ENCODE measurements at regions of chr1 and their contacts with region 1.

Region 1: DNA sequence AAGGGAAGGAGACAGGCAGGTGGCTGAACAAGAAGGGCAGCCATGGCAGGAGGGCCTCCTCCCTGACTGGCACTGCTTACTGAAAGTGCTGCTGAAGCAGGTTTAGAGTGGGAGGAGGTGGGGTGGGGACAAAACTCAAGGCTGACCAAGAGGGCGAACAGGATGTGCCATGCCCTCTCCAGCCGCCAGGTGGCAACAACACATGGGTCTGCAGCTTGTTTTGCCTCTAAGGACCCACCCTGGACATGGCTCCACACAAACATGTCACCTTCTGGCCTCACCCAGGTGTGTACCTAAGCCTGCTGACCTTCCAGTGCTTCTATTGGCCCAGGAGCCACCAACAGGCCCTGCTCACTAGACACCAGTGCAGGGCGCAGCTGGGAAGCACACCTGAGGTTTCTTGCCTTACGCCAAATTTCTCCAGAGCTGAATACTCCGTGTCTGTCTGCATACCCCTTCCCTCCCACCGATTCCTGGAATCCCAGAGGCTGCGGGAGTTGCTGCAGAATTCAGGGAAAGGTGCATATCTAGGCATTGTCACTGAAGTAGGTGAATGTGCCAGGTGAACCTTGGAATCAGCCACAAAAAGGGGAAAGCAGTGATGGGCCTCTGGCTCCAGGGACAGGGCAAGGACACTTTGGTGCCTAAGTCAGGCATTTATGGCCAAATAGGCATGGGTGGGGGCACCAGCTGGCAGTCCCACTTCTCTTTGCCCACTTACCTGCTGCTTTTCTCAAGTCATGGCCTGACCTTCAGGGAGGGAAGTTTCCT is 5.3 kb downstream of the PSRC1 start:
- DNase-seq: peak; percentile 84 to 94
- H3K4me3 ChIP-seq: no peak overlapping the region
- H3K27ac ChIP-seq: peak overlapping the region in 3 of 5 donors; percentile 1 to 36 (median 5)
- H3K4me1 ChIP-seq: peaks cover 36 to 70% (median 39%) of the 10 kb centered on the region in 4 donors
- H3K27me3 ChIP-seq: no peaks in the 10 kb centered on the region
- CTCF ChIP-seq: peak in 5 of 7 experiments; percentile 88 to 94 (median 93)
- EP300 ChIP-seq: no peak
- POLR2A ChIP-seq: no peak

Region 2: GRCh38 chr1:109331113-109331512 is 53.5 kb after region 1 on chr1:
- intact Hi-C with region 1: no loop called
- DNase-seq: no peak
- H3K4me3 ChIP-seq: no peak overlapping the region
- H3K27ac ChIP-seq: no peak overlapping the region
- H3K4me1 ChIP-seq: no peaks in the 10 kb centered on the region
- H3K27me3 ChIP-seq: no peaks in the 10 kb centered on the region
- CTCF ChIP-seq: no peak
- EP300 ChIP-seq: no peak
- POLR2A ChIP-seq: no peak

Region 3: DNA sequence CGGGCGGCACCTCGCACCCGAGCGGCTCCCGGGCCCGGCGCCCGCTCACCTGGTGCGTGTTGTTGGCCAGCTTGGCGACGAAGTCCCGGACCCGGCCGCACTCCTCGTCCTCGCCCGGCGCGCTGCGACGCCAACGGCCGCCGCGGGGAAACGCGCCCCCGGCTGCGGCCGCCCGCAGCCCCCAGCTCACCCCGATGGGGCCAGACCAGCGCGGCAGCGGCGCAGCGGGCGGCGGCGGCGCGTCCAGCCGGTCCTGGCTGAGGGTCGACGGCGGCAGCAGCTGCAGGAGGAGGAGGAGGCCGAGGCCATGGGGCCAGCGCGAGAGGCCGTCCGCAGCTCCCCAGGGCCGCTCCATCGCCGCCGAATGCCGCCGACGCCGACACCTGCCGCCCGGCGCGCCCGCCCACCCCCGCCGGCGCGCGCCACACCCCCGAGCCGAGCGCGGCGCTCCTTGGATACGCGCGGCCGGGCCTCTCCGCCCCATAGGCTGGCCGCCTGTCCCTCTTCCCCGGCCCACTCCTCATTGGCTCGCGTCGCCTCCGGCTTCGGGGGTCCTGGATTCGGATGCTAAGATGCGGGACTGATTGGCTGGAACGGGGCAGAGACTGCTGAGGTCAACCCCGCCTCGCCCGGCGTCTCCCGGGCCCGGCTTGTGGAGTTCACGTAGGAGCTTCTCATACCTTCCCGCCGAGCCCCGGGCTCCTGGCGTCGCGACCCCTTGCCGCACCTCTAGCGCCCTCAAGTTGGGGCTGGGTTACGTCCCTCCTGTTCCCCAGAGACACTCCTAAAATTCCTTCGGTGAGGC is 120.1 kb after region 1 on chr1 and contains the start of gene SORT1:
- intact Hi-C with region 1: loop called (anchors 5 kb)
- DNase-seq: peak; percentile 85 to 96
- H3K4me3 ChIP-seq: peak within 1 kb of the TSS; percentile 65 to 89 (median 68)
- H3K27ac ChIP-seq: peak within 1 kb of the TSS; percentile 84 to 90 (median 87)
- H3K4me1 ChIP-seq: peaks cover 30 to 60% (median 43%) of the 10 kb centered on the region in 4 donors
- H3K27me3 ChIP-seq: no peaks in the 10 kb centered on the region
- CTCF ChIP-seq: no peak
- EP300 ChIP-seq: no peak
- POLR2A ChIP-seq: no peak
- total RNA-seq, gene SORT1: 35.3 to 481 (median 48.1) TPM

Measured in stomach (tissue), 19 donors.